Activated B cell treated with CpG ODN at 0.5 μM for 24 hours (primary cell): ENCODE measurements at regions of chr5 and their contacts with region 1.

Region 1: DNA sequence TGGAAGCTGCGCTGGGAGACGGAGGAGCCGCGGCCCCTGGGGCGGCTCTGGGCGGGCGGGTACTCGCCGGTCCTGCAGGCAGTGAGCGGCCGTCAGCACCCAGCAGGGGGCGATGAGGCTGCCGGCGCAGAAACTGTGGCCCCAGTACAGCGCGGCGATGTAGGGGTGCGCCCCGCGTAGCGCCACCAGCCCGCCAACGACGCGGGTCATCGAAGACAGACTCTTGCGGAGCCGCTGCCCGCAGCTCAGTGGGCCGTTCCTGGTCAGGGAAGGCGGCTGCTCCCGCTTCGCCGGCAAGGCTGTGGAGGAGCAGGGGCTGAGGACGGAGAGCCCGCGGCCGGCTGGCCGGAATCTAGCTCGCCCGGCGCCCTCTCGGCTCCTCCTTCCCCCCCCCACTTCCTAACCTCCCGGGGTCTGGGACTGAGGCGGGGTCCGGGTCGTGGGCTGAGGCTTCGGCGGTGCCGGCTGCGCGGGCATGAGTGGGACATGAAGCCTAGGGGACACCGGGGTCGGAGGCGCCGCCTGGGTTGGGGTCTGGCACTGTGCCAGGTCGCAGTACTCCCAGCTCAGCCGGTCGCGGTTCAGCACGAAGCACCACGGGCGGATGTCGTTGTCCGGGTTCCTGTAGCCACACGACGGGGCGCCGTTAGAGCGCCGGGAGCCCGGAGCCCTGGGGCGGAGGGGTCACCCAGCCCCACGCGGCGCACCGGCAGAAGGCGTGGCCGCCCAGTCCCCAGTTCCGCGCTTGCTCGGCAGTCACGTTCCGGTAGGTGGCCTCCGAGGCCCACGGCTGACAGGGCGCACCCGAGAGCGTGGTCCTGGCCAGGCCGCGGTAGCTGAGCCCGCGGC is 3.6 kb upstream of the PFN3 start:
- DNase-seq: peak; percentile 77
- ATAC-seq: peak; percentile 82
- H3K4me3 Mint-ChIP-seq: peak overlapping the region; percentile 79
- H3K27ac Mint-ChIP-seq: no peak overlapping the region
- H3K4me1 Mint-ChIP-seq: peaks cover 39% of the 10 kb centered on the region
- H3K27me3 Mint-ChIP-seq: peaks cover 5% of the 10 kb centered on the region
- CTCF ChIP-seq: peak; percentile 7

Region 2: DNA sequence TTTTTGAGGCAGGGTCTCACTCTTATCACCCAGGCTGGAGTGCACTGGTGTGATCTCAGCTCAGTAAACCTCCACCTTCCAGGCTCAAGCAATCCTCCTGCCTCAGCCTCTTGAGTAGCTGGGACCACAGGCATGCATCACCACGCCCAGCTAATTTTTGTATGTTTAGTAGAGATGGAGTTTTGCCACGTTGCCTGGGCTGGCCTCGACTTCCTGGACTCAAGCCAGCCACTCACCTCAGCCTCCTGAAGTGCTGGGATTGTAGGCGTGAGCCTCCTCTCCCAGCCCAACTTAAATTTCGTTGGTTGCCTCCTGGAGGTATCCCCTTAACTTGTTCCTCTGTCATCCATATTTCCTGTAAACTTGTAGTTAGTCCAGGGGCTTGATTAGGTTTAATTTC is 147.7 kb before region 1 on chr5:
- CTCF ChIA-PET with region 1: no interaction called
- POLR2A ChIA-PET with region 1: no interaction called
- intact Hi-C with region 1: no loop called
- DNase-seq: no peak
- ATAC-seq: no peak
- H3K4me3 Mint-ChIP-seq: no peak overlapping the region
- H3K27ac Mint-ChIP-seq: no peak overlapping the region
- H3K4me1 Mint-ChIP-seq: no peaks in the 10 kb centered on the region
- H3K27me3 Mint-ChIP-seq: no peaks in the 10 kb centered on the region
- CTCF ChIP-seq: no peak

Region 3: DNA sequence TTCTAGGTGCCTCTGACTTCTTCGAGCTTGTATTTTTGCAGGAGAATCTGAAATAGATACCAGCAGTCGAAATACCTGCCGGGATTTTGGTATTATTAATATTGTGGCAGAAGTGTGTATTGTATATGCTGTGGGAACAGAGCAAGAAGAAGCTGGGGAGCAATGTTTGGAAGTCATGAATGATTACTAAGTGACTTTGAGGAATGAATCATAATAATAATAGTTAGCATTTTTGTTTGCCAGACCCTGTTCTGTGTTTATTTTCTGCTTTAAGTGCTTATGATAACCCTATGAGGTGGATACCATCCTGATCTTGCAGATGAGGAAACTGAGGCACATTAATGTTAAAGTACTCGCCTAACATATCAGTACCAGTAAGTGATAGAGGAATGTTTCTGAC is 132.9 kb before region 1 on chr5:
- CTCF ChIA-PET with region 1: no interaction called
- POLR2A ChIA-PET with region 1: no interaction called
- intact Hi-C with region 1: no loop called
- DNase-seq: no peak
- ATAC-seq: no peak
- H3K4me3 Mint-ChIP-seq: no peak overlapping the region
- H3K27ac Mint-ChIP-seq: no peak overlapping the region
- H3K4me1 Mint-ChIP-seq: no peaks in the 10 kb centered on the region
- H3K27me3 Mint-ChIP-seq: no peaks in the 10 kb centered on the region
- CTCF ChIP-seq: no peak

Region 4: GRCh38 chr5:177311723-177312648 is 92.0 kb before region 1 on chr5 and contains the start of gene MXD3:
- CTCF ChIA-PET with region 1: interaction called, 4 read pairs
- POLR2A ChIA-PET with region 1: no interaction called
- intact Hi-C with region 1: loop called (anchors 2 kb)
- DNase-seq: peak; percentile 89
- ATAC-seq: peak; percentile 90
- H3K4me3 Mint-ChIP-seq: peak within 1 kb of the TSS; percentile 80
- H3K27ac Mint-ChIP-seq: peak within 1 kb of the TSS; percentile 47
- H3K4me1 Mint-ChIP-seq: peaks cover 38% of the 10 kb centered on the region
- H3K27me3 Mint-ChIP-seq: no peaks in the 10 kb centered on the region
- CTCF ChIP-seq: no peak
- total RNA-seq, gene MXD3: 7.6 and 9.1 TPM in 2 replicates

Region 5: DNA sequence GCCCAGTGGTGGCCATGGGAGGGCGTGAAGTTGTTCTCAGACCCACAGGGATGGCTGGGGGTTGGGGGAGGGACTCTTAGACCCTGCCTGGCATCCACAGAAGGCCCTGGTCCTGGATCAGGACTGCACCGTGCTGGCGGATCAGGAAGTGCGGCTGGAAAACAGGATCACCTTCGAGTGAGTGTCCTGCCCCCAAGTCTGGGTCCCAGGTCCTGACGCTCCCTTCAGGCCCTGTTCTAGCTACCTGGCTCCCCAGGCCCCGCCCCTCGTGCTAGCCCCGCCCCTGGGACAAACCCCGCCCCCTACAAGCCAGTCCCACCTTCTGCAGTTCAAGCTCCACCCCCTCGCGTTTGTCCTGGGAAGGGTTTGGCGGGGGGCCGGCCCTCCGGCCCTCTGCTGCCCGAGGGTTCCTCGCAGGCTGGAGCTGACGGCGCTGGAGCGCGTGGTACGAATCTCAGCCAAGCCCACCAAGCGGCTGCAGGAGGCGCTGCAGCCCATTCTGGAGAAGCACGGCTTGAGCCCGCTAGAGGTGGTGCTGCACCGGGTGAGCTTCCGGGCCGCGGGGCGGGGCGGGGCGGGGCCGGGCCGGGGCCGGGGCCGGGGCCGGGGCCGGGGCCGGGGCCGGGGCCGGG is 33.4 kb before region 1 on chr5:
- CTCF ChIA-PET with region 1: interaction called, 19 read pairs
- POLR2A ChIA-PET with region 1: interaction called, 4 read pairs
- intact Hi-C with region 1: no loop called
- DNase-seq: peak; percentile 48
- ATAC-seq: peak; percentile 85
- H3K4me3 Mint-ChIP-seq: peak overlapping the region; percentile 60
- H3K27ac Mint-ChIP-seq: no peak overlapping the region
- H3K4me1 Mint-ChIP-seq: peaks cover 53% of the 10 kb centered on the region
- H3K27me3 Mint-ChIP-seq: no peaks in the 10 kb centered on the region
- CTCF ChIP-seq: no peak

Region 6: GRCh38 chr5:177425801-177426565 is 22.0 kb after region 1 on chr5:
- CTCF ChIA-PET with region 1: interaction called, 53 read pairs
- POLR2A ChIA-PET with region 1: interaction called, 43 read pairs
- intact Hi-C with region 1: loop called (anchors 1 kb)
- DNase-seq: peak; percentile 91
- ATAC-seq: peak; percentile 85
- H3K4me3 Mint-ChIP-seq: peak overlapping the region; percentile 91
- H3K27ac Mint-ChIP-seq: peak overlapping the region; percentile 93
- H3K4me1 Mint-ChIP-seq: peaks cover 53% of the 10 kb centered on the region
- H3K27me3 Mint-ChIP-seq: no peaks in the 10 kb centered on the region
- CTCF ChIP-seq: no peak

Region 7: GRCh38 chr5:177440211-177440971 is 36.4 kb after region 1 on chr5:
- CTCF ChIA-PET with region 1: interaction called, 293 read pairs
- POLR2A ChIA-PET with region 1: interaction called, 66 read pairs
- intact Hi-C with region 1: no loop called
- DNase-seq: no peak
- ATAC-seq: peak; percentile 10
- H3K4me3 Mint-ChIP-seq: no peak overlapping the region
- H3K27ac Mint-ChIP-seq: peak overlapping the region; percentile 50
- H3K4me1 Mint-ChIP-seq: peaks cover 26% of the 10 kb centered on the region
- H3K27me3 Mint-ChIP-seq: no peaks in the 10 kb centered on the region
- CTCF ChIP-seq: no peak

Region 8: DNA sequence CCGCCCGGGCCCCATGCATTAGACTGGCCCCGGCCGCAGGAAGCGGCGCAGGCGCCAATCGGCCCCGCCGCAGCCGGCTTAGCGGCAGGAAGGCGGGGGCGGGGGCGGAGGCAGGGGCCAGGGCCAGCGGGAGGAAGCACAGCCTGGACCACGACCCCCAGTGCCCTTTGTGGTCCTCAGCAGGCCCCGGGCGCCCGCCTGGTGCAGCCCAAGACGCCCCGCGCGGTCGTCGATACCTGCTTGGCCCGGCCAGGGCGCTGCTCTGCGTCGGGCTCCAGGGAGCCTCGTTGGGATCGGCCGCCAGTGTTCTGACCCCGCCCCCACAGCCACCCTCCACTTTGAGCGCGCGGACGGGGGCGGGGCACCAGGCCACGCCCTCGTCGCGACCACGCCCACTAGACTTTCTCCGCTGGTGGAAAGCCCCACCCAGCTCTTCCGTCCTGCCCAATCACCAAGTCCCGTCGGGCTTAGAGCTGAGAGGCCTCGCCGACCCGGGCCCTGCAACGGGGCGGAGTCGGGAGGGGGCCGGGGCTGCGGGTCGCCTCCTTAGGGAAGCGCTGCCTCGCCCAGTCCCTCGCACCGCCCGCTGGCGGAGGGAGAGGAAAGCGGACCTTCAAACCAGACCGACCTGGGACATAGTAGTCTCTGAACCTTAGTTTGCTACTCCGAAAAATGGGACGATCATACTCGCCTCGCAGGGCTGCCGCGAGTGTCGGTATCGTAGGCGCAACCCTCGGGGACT is 93.4 kb after region 1 on chr5 and contains the start of gene PDLIM7:
- CTCF ChIA-PET with region 1: interaction called, 10 read pairs
- POLR2A ChIA-PET with region 1: no interaction called
- intact Hi-C with region 1: loop called (anchors 1 kb)
- DNase-seq: peak; percentile 97
- ATAC-seq: peak; percentile 83
- H3K4me3 Mint-ChIP-seq: peak within 1 kb of the TSS; percentile 80
- H3K27ac Mint-ChIP-seq: peak within 1 kb of the TSS; percentile 39
- H3K4me1 Mint-ChIP-seq: peaks cover 79% of the 10 kb centered on the region
- H3K27me3 Mint-ChIP-seq: peaks cover 2% of the 10 kb centered on the region
- CTCF ChIP-seq: no peak
- total RNA-seq, gene PDLIM7: 17.0 and 17.7 TPM in 2 replicates